ENCODE measurements at regions of chr15 and their contacts with region 1.

Region 1: DNA sequence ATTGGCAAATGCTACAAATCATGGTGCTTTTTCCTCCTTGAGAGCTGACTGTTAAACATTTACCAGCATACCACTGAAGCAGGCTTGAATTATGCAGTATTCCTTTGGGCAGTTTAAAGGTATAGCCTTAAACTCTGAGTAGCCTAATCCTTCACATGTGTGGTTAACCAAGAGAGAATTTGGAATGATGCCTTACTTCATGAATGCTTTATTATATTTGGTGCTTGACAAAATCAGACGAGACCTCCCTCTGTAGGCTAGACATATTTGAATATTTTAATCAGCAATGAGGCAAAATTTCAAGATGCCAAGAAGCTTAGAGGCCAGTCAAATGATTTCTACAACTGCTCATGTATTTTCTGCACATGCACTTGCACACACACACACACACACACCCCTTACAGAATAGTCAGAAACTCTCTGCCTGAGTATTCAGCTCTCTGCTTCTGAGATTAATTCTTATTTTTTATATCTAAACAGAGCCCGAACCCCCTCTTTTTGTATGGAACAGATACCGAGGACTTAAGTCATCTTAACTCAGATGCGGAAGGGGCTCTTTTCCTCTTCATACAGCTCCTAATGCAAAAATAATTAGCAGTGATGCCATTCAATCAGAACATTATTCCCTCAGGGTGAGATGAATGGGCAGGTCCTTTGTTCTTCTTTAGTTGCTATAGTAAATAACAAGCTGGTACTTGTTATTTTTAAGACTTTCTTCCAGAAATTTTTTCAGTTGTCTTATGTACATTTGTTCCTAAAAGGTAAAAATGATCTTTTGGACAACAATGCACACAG is 195.5 kb upstream of the TMC3 start:
- DNase-seq: no peak
- ATAC-seq: no peak
- H3K4me3 ChIP-seq: no peak overlapping the region
- H3K27ac ChIP-seq: no peak overlapping the region
- H3K4me1 ChIP-seq: no peaks in the 10 kb centered on the region
- H3K27me3 ChIP-seq: peaks cover 0 to 9% (median 0%) of the 10 kb centered on the region in 9 donors
- CTCF ChIP-seq: no peak
- POLR2A ChIP-seq: no peak

Region 2: DNA sequence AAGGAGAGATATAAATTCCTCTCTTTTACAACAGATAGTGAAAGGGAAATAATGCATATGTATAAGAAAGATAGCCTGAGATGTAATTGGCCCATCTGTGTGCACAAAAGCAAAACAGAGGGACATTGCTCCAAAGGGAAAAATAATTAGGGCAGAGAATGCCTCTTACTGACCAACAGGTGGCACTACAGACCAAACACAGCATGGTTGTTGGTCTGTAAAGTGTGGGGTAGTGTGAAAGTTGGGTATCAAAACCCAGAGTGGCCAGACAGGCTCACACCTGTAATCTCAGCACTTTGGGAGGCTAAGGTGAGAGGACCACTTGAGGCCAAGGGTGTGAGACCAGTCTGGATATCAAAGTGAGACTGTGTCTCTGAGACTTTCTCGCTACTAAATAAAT is 573.2 kb before region 1 on chr15:
- intact Hi-C with region 1: no loop called
- DNase-seq: no peak
- ATAC-seq: no peak
- H3K4me3 ChIP-seq: no peak overlapping the region
- H3K27ac ChIP-seq: no peak overlapping the region
- H3K4me1 ChIP-seq: peaks cover 0 to 31% (median 10%) of the 10 kb centered on the region in 12 donors
- H3K27me3 ChIP-seq: no peaks in the 10 kb centered on the region
- CTCF ChIP-seq: peak; percentile 25 to 49 (median 42)
- POLR2A ChIP-seq: no peak

Region 3: GRCh38 chr15:81612630-81613029 is 43.1 kb after region 1 on chr15:
- intact Hi-C with region 1: loop called in 1 of 10 experiments (anchors 10 kb)
- DNase-seq: no peak
- ATAC-seq: no peak
- H3K4me3 ChIP-seq: no peak overlapping the region
- H3K27ac ChIP-seq: no peak overlapping the region
- H3K4me1 ChIP-seq: no peaks in the 10 kb centered on the region
- H3K27me3 ChIP-seq: peaks cover 0 to 12% (median 0%) of the 10 kb centered on the region in 9 donors
- CTCF ChIP-seq: no peak
- POLR2A ChIP-seq: no peak

Measured in heart left ventricle (tissue), 16 donors.